Natural killer cell (primary cell): ENCODE measurements at regions of chr11 and their contacts with region 1.

Region 1: DNA sequence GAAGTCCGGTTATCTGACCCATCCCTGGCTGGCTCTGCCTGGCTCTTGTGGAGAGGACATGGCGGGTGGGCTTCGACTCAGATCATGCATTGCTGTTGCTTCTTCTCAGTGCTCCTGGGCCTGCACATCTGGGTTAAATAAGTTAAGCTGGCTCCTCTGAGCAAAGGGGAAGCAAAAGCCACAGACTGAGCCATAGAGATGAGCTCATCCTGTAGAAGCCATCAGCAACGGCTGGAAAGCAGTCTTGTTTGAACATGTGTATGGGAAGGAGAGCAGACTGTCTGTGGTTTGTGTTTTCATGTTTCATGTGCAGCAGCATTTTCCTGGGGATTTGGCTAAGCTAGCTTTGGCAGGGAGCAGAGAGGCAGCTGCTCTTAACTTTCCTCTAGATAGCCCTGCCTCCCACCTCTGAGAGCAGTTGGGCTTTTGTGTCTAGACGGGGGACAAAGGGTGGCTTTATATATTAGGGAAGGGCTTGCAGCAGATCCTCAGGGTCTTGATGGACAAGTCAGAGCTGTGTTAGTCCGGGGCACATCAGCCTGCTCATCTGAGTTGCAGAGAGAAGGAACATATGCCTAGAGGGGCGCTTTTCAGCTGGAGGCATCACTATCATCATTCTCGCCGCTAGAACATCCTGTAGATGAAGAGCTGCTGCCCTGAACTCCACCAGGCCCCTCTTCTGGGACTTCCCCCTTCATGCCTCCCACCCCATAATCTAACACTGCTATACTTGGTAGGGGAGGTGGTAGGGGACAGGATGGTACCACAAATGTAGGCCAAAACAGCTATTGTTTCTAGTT is 14.9 kb downstream of the DCPS start:
- DNase-seq: peak; percentile 54
- ATAC-seq: peak; percentile 83 to 93 (median 92)
- H3K4me3 ChIP-seq: no peak overlapping the region
- H3K4me3 Mint-ChIP-seq: peak overlapping the region; percentile 83
- H3K27ac ChIP-seq: peak overlapping the region; percentile 79
- H3K27ac Mint-ChIP-seq: peak overlapping the region; percentile 92 to 99
- H3K4me1 ChIP-seq: peaks cover 43% of the 10 kb centered on the region
- H3K4me1 Mint-ChIP-seq: peaks cover 55 to 60% of the 10 kb centered on the region in 2 donors
- H3K27me3 ChIP-seq: no peaks in the 10 kb centered on the region
- H3K27me3 Mint-ChIP-seq: no peaks in the 10 kb centered on the region
- CTCF ChIP-seq: no peak

Region 2: DNA sequence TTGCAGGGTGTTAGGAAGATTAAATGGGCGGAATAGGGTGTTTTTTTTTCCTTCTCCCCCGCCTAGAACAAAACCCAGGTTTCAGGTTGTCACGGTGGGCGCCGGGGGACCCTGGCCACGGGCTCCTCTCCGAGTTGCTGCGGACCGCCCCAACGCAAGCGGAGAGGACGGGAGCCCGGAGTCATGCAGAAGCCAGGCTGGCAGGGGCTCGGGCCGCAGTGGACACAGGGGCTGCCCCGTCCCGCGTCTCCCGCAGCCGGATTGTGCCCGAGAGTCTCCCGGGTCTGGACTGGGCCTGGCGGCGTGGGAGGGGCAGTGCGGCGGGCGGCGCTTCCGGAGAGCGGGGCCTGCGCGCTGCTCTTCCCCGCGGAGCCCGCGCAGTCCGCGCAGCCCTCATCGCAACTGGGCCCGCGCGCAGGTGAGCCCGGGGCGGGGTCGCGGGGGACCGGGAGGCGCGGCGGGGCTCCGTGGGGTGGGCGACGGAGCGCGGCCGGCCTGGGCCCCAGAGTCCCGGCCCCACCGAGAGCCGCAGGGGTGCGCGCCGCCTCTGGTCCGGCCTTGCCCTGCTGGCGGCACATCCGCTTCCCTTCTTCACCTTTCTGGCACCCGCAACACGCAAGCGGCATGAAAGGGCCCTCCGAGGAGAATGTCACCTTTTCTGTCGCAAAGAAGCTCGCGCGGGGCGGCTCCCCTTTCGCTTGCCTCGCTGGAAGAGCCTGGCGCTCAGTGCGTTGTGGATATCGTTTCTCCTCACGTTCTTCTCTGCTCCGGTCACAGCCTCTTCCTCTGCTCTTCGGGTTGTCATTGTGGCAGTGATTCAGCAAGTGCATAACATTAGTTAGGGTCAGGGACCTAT is 35.8 kb before region 1 on chr11 and contains the start of gene TIRAP:
- intact Hi-C with region 1: no loop called
- DNase-seq: peak; percentile 53 to 81
- ATAC-seq: peak; percentile 80 to 82 (median 81)
- H3K4me3 ChIP-seq: peak within 1 kb of the TSS; percentile 89
- H3K4me3 Mint-ChIP-seq: peak within 1 kb of the TSS; percentile 99
- H3K27ac ChIP-seq: peak within 1 kb of the TSS; percentile 90
- H3K27ac Mint-ChIP-seq: peak within 1 kb of the TSS; percentile 95 to 96
- H3K4me1 ChIP-seq: peaks cover 37% of the 10 kb centered on the region
- H3K4me1 Mint-ChIP-seq: peaks cover 24 to 39% of the 10 kb centered on the region in 2 donors
- H3K27me3 ChIP-seq: no peaks in the 10 kb centered on the region
- H3K27me3 Mint-ChIP-seq: no peaks in the 10 kb centered on the region
- CTCF ChIP-seq: no peak
- total RNA-seq, gene TIRAP: 14.5 to 24.0 (median 19.5) TPM

Region 3: DNA sequence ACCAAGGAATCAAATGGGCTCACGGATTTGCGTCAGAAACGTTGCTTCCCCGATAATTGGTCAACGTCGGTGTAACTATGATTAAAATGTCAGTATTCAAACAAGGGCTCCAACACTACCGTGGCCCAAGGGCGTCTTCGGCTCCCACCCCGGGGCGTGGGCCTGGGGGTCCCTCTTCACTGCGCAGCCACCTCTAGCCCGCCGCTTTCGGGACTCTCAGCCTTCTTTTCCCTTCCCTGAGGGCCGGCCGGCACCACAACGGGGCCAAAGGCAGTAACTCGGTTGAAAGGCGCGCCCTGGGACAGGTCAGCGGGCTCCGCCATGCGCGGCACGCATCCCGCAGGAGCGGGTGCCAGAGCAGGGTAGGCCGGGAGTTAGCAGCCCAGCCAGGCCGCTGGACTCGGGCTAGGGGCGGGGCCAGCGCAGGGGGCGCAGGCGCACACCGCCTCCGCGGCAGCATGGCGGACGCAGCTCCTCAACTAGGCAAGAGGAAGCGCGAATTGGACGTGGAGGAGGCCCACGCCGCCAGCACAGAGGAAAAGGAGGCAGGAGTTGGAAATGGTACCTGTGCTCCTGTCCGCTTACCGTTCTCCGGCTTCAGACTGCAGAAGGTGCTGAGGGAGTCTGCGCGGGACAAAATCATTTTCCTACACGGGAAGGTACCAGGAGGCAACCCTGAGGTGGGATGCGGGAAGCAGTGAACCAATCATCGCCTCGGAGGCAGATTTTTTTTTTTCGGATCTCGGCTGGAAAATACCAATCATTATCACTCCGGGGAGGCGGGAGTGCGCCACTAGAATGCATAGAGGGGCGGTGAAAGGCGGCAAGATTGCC is 14.9 kb before region 1 on chr11 and contains the start of gene DCPS:
- intact Hi-C with region 1: loop called (anchors 1 kb)
- DNase-seq: peak; percentile 88 to 92
- ATAC-seq: peak; percentile 99
- H3K4me3 ChIP-seq: peak within 1 kb of the TSS; percentile 69
- H3K4me3 Mint-ChIP-seq: peak within 1 kb of the TSS; percentile 96
- H3K27ac ChIP-seq: peak within 1 kb of the TSS; percentile 81
- H3K27ac Mint-ChIP-seq: peak within 1 kb of the TSS; percentile 90 to 94
- H3K4me1 ChIP-seq: peaks cover 26% of the 10 kb centered on the region
- H3K4me1 Mint-ChIP-seq: peaks cover 29 to 33% of the 10 kb centered on the region in 2 donors
- H3K27me3 ChIP-seq: no peaks in the 10 kb centered on the region
- H3K27me3 Mint-ChIP-seq: no peaks in the 10 kb centered on the region
- CTCF ChIP-seq: no peak
- total RNA-seq, gene DCPS: 20.1 to 25.8 (median 23.1) TPM

Region 4: GRCh38 chr11:126332131-126332711 is 13.4 kb after region 1 on chr11:
- intact Hi-C with region 1: loop called (anchors 1 kb)
- DNase-seq: peak; percentile 65
- ATAC-seq: peak; percentile 69 to 90 (median 80)
- H3K4me3 ChIP-seq: no peak overlapping the region
- H3K4me3 Mint-ChIP-seq: peak overlapping the region; percentile 80
- H3K27ac ChIP-seq: peak overlapping the region; percentile 85
- H3K27ac Mint-ChIP-seq: peak overlapping the region; percentile 88 to 97
- H3K4me1 ChIP-seq: peaks cover 90% of the 10 kb centered on the region
- H3K4me1 Mint-ChIP-seq: peaks cover 84 to 85% of the 10 kb centered on the region in 2 donors
- H3K27me3 ChIP-seq: no peaks in the 10 kb centered on the region
- H3K27me3 Mint-ChIP-seq: no peaks in the 10 kb centered on the region
- CTCF ChIP-seq: no peak